CD4-positive, alpha-beta memory T cell (primary cell): ENCODE measurements at regions of chr19 and their contacts with region 1.

Region 1: GRCh38 chr19:38929929-38930775 is at the start of gene SARS2:
- DNase-seq: peak; percentile 92 to 99 (median 97)
- H3K4me3 ChIP-seq: peak within 1 kb of the TSS; percentile 85 to 87
- H3K4me3 Mint-ChIP-seq: peak within 1 kb of the TSS; percentile 94 to 99 (median 98)
- H3K27ac ChIP-seq: peak within 1 kb of the TSS; percentile 93
- H3K27ac Mint-ChIP-seq: peak within 1 kb of the TSS; percentile 98 to 100 (median 100)
- H3K4me1 ChIP-seq: peaks cover 40% of the 10 kb centered on the region
- H3K4me1 Mint-ChIP-seq: peaks cover 13 to 57% (median 32%) of the 10 kb centered on the region in 4 donors
- H3K27me3 ChIP-seq: no peaks in the 10 kb centered on the region
- H3K27me3 Mint-ChIP-seq: no peaks in the 10 kb centered on the region
- total RNA-seq, gene SARS2: 17.0 to 20.2 TPM

Region 2: DNA sequence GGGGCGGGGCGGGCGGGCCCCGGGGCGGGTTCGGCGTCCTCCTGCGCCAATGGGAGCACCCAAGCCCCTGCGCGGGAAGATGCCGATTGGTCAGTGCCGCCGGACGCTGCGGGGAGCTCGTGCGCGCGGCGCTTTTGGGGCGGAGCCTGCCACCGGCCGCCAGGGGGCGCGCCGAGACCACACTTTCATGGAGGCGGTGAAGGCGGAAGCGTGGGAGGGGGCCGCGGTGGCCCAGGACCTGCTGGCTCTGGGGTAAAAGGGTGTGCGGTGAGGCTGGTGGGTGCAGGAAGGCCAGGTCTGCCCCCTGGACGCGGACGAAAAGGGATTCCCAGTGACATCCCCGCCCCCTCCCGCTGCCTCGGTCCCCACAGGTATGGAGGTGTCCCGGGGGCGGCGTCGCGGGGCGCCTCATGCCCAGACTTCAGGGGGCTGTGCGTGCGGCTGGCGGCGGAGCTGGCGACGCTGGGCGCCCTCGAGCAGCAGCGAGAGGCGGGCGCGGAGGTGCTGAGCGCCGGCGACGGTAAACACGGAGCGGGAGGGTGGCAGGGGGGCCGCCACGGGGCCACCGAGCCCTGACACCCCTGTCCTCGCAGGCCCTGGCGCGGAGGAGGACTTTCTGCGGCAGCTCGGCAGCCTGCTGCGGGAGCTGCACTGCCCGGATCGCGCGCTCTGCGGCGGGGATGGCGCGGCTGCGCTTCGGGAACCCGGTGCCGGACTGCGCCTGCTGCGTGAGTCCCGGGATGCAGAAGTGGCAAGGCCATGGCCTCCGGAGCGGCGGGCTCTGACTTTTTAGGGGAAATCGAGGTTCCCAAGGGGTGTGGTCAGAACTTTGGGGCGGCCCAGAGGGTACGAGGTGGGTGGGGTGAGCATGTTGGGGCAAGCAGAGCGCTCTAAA is 526.9 kb before region 1 on chr19 and contains the start of gene FAM98C:
- CTCF ChIA-PET with region 1: interaction called, 47 read pairs
- POLR2A ChIA-PET with region 1: interaction called, 28 read pairs
- intact Hi-C with region 1: loop called (anchors 1 kb)
- DNase-seq: peak; percentile 97 to 99 (median 98)
- H3K4me3 ChIP-seq: peak within 1 kb of the TSS; percentile 52 to 94
- H3K4me3 Mint-ChIP-seq: peak within 1 kb of the TSS; percentile 89 to 95 (median 90)
- H3K27ac ChIP-seq: peak within 1 kb of the TSS; percentile 77
- H3K27ac Mint-ChIP-seq: peak within 1 kb of the TSS; percentile 88 to 97 (median 96)
- H3K4me1 ChIP-seq: peaks cover 15% of the 10 kb centered on the region
- H3K4me1 Mint-ChIP-seq: peaks cover 2 to 17% (median 13%) of the 10 kb centered on the region in 4 donors
- H3K27me3 ChIP-seq: no peaks in the 10 kb centered on the region
- H3K27me3 Mint-ChIP-seq: no peaks in the 10 kb centered on the region
- total RNA-seq, gene FAM98C: 53.1 to 53.8 TPM

Region 3: GRCh38 chr19:38544034-38544958 is 385.9 kb before region 1 on chr19:
- CTCF ChIA-PET with region 1: interaction called, 10 read pairs
- POLR2A ChIA-PET with region 1: interaction called, 7 read pairs
- intact Hi-C with region 1: loop called (anchors 1 kb)
- DNase-seq: peak in 4 of 5 donors; percentile 61 to 71 (median 65)
- H3K4me3 ChIP-seq: no peak overlapping the region
- H3K4me3 Mint-ChIP-seq: peak overlapping the region in 7 of 8 donors; percentile 21 to 76 (median 56)
- H3K27ac ChIP-seq: no peak overlapping the region
- H3K27ac Mint-ChIP-seq: peak overlapping the region in 4 of 7 donors; percentile 27 to 89 (median 72)
- H3K4me1 ChIP-seq: peaks cover 23% of the 10 kb centered on the region
- H3K4me1 Mint-ChIP-seq: peaks cover 15 to 32% (median 21%) of the 10 kb centered on the region in 4 donors
- H3K27me3 ChIP-seq: no peaks in the 10 kb centered on the region
- H3K27me3 Mint-ChIP-seq: no peaks in the 10 kb centered on the region

Region 4: DNA sequence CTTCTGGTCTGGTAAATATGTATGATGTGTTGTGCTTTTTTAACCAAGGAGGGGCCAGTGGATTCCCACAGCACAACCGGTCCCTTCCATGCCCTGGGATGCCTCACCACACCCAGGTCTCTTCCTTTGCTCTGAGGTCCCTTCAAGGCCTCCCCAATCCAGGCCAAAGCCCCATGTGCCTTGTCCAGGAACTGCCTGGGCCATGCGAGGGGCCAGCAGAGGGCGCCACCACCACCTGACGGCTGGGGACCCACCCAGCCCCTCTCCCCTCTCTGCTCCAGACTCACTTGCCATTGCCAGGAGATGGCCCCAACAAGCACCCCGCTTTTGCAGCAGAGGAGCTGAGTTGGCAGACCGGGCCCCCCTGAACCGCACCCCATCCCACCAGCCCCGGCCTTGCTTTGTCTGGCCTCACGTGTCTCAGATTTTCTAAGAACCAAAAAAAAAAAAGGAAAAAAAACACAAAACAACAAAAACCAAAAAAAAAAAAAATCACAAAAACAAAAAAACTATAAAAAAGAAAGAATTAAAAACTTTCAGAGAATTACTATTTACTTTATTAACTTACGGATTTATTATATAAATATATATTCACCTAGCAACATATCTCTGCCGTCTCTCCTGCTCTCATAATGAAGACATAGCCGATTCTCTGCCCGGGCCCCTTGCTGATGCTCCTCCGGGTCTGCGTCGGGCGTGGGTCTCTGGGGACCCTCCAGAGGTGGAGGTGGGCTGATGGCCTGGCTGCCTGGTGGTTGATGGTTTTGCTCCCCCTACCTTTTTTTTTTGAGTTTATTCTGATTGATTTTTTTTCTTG is 200.3 kb before region 1 on chr19:
- CTCF ChIA-PET with region 1: interaction called, 18 read pairs
- POLR2A ChIA-PET with region 1: interaction called, 15 read pairs
- intact Hi-C with region 1: loop called (anchors 1 kb)
- DNase-seq: peak; percentile 67 to 73 (median 70)
- H3K4me3 ChIP-seq: no peak overlapping the region
- H3K4me3 Mint-ChIP-seq: no peak overlapping the region
- H3K27ac ChIP-seq: no peak overlapping the region
- H3K27ac Mint-ChIP-seq: peak overlapping the region; percentile 19 to 88 (median 61)
- H3K4me1 ChIP-seq: peaks cover 20% of the 10 kb centered on the region
- H3K4me1 Mint-ChIP-seq: peaks cover 16 to 62% (median 29%) of the 10 kb centered on the region in 4 donors
- H3K27me3 ChIP-seq: no peaks in the 10 kb centered on the region
- H3K27me3 Mint-ChIP-seq: no peaks in the 10 kb centered on the region

Region 5: GRCh38 chr19:38831142-38831605 is 99.0 kb before region 1 on chr19:
- CTCF ChIA-PET with region 1: interaction called, 6 read pairs
- POLR2A ChIA-PET with region 1: interaction called, 10 read pairs
- intact Hi-C with region 1: no loop called
- DNase-seq: peak in 1 of 5 donors; percentile 57
- H3K4me3 ChIP-seq: peak overlapping the region; percentile 82 to 87
- H3K4me3 Mint-ChIP-seq: peak overlapping the region; percentile 88 to 95 (median 94)
- H3K27ac ChIP-seq: peak overlapping the region; percentile 79
- H3K27ac Mint-ChIP-seq: peak overlapping the region; percentile 92 to 98 (median 95)
- H3K4me1 ChIP-seq: peaks cover 22% of the 10 kb centered on the region
- H3K4me1 Mint-ChIP-seq: peaks cover 17 to 50% (median 32%) of the 10 kb centered on the region in 4 donors
- H3K27me3 ChIP-seq: no peaks in the 10 kb centered on the region
- H3K27me3 Mint-ChIP-seq: no peaks in the 10 kb centered on the region

Region 6: GRCh38 chr19:38891771-38892170 is 38.4 kb before region 1 on chr19:
- CTCF ChIA-PET with region 1: interaction called, 11 read pairs
- POLR2A ChIA-PET with region 1: interaction called, 3 read pairs
- intact Hi-C with region 1: no loop called
- DNase-seq: no peak
- H3K4me3 ChIP-seq: no peak overlapping the region
- H3K4me3 Mint-ChIP-seq: no peak overlapping the region
- H3K27ac ChIP-seq: no peak overlapping the region
- H3K27ac Mint-ChIP-seq: peak overlapping the region in 1 of 7 donors; percentile 13
- H3K4me1 ChIP-seq: peaks cover 4% of the 10 kb centered on the region
- H3K4me1 Mint-ChIP-seq: peaks cover 2 to 13% (median 5%) of the 10 kb centered on the region in 4 donors
- H3K27me3 ChIP-seq: no peaks in the 10 kb centered on the region
- H3K27me3 Mint-ChIP-seq: no peaks in the 10 kb centered on the region